ENCODE measurements at regions of chr10 and their contacts with region 1.

Region 1: DNA sequence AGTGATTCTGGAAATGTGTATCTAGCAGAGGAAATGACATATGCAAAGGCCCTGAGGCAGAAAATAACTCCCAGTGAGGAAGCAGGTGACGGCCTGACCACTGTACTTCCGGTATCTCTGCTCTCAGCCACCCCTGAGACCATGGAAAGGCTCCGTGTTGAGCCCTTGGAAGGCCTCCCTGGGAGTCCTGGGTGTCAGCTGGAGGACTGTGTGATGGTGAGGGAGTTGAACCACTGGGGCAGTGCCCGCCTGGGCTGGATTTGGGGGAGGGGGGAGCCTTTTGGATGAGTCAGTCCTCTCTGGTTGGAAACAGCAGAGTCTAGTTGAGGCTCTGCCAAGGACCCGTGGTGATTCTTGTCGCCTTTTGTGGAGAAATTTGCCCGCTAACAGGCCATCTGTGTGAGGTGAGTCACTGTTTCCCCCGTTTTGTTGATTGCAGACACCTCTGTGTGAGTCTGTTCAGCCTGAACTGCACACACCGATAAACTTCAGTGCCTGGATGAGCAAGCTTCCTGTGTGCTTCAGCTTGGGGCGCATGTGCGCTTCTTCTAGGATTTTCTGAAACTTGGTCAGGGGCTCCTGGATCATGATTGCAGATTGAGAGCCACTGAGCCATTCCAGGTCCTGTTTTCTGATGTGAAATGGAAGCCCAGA is 98.6 kb downstream of the GRK5 start:
- DNase-seq: peak; percentile 97
- H3K4me3 Mint-ChIP-seq: peak overlapping the region; percentile 68
- H3K27ac Mint-ChIP-seq: peak overlapping the region; percentile 99
- H3K4me1 Mint-ChIP-seq: peaks cover 74% of the 10 kb centered on the region
- H3K27me3 Mint-ChIP-seq: no peaks in the 10 kb centered on the region

Region 2: GRCh38 chr10:118892255-118892654 is 413.7 kb before region 1 on chr10:
- CTCF ChIA-PET with region 1: no interaction called
- intact Hi-C with region 1: no loop called
- DNase-seq: no peak
- H3K4me3 Mint-ChIP-seq: no peak overlapping the region
- H3K27ac Mint-ChIP-seq: no peak overlapping the region
- H3K4me1 Mint-ChIP-seq: no peaks in the 10 kb centered on the region
- H3K27me3 Mint-ChIP-seq: no peaks in the 10 kb centered on the region

Region 3: DNA sequence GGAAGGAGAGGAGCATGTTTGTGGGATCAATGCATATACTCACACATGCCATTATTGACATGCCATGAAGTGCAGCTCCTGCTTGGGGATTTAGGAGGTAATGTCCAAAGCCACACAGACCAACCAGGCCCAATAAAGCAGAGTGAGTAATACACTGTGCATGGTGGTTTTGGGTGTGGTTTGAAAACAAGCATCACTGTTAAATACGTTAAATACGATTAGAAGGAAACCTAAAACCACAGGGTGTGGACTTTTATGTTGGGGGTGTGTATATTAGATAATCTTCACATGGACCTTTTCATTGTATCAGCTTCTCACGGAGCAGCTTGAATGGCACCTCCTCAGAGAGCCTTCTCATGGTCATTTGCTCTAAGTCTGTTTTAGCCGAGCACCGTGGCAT is 215.0 kb before region 1 on chr10:
- CTCF ChIA-PET with region 1: no interaction called
- intact Hi-C with region 1: no loop called
- DNase-seq: peak; percentile 31
- H3K4me3 Mint-ChIP-seq: no peak overlapping the region
- H3K27ac Mint-ChIP-seq: no peak overlapping the region
- H3K4me1 Mint-ChIP-seq: peaks cover 22% of the 10 kb centered on the region
- H3K27me3 Mint-ChIP-seq: no peaks in the 10 kb centered on the region

Region 4: GRCh38 chr10:119131512-119132240 is 174.3 kb before region 1 on chr10:
- CTCF ChIA-PET with region 1: no interaction called
- intact Hi-C with region 1: loop called (anchors 1 kb)
- DNase-seq: peak; percentile 80
- H3K4me3 Mint-ChIP-seq: peak overlapping the region; percentile 80
- H3K27ac Mint-ChIP-seq: peak overlapping the region; percentile 99
- H3K4me1 Mint-ChIP-seq: peaks cover 44% of the 10 kb centered on the region
- H3K27me3 Mint-ChIP-seq: no peaks in the 10 kb centered on the region

Region 5: GRCh38 chr10:119285489-119286267 is 20.3 kb before region 1 on chr10:
- CTCF ChIA-PET with region 1: interaction called, 6 read pairs
- intact Hi-C with region 1: loop called (anchors 1 kb)
- DNase-seq: no peak
- H3K4me3 Mint-ChIP-seq: peak overlapping the region; percentile 55
- H3K27ac Mint-ChIP-seq: peak overlapping the region; percentile 78
- H3K4me1 Mint-ChIP-seq: peaks cover 81% of the 10 kb centered on the region
- H3K27me3 Mint-ChIP-seq: no peaks in the 10 kb centered on the region

Region 6: DNA sequence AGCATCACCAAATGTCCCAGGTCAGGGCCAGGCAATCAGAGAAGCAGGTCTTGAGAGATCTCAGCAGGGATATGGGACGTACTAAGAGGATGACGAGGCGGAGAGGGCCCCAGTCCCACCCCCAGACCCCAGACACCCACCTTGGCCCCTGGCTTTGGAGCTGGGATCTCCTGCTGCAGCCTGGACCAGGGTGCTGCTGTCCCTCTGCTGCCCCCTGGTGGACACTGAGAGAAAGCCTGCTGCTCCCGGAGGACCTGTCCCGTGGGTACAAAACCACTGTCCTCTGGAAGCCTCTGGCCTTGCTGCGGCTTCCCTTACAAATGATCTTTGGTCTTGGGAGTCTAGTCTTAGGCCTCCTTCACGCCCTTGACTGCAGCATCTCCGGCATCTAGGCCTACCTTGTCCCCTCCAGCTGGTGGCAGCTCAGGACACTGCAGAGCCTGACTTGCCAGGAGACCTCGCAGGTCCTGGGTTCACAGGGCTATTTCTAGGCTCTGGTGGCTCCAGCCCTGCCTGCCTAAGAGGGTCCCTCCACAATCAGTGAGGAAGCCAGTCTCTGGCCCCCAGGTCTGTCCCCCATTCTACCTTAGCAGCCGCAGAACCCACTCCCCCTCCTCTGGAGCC is 139.4 kb after region 1 on chr10:
- CTCF ChIA-PET with region 1: no interaction called
- intact Hi-C with region 1: no loop called
- DNase-seq: peak; percentile 92
- H3K4me3 Mint-ChIP-seq: no peak overlapping the region
- H3K27ac Mint-ChIP-seq: no peak overlapping the region
- H3K4me1 Mint-ChIP-seq: peaks cover 9% of the 10 kb centered on the region
- H3K27me3 Mint-ChIP-seq: no peaks in the 10 kb centered on the region

Region 7: GRCh38 chr10:119489991-119490326 is 184.0 kb after region 1 on chr10:
- CTCF ChIA-PET with region 1: interaction called, 3 read pairs
- intact Hi-C with region 1: loop called (anchors 1 kb)
- DNase-seq: no peak
- H3K4me3 Mint-ChIP-seq: peak overlapping the region; percentile 79
- H3K27ac Mint-ChIP-seq: peak overlapping the region; percentile 91
- H3K4me1 Mint-ChIP-seq: peaks cover 50% of the 10 kb centered on the region
- H3K27me3 Mint-ChIP-seq: no peaks in the 10 kb centered on the region

Region 8: GRCh38 chr10:119542988-119543813 is 237.2 kb after region 1 on chr10:
- CTCF ChIA-PET with region 1: no interaction called
- intact Hi-C with region 1: loop called (anchors 1 kb)
- DNase-seq: peak; percentile 83
- H3K4me3 Mint-ChIP-seq: peak overlapping the region; percentile 84
- H3K27ac Mint-ChIP-seq: peak overlapping the region; percentile 88
- H3K4me1 Mint-ChIP-seq: peaks cover 25% of the 10 kb centered on the region
- H3K27me3 Mint-ChIP-seq: no peaks in the 10 kb centered on the region

Region 9: DNA sequence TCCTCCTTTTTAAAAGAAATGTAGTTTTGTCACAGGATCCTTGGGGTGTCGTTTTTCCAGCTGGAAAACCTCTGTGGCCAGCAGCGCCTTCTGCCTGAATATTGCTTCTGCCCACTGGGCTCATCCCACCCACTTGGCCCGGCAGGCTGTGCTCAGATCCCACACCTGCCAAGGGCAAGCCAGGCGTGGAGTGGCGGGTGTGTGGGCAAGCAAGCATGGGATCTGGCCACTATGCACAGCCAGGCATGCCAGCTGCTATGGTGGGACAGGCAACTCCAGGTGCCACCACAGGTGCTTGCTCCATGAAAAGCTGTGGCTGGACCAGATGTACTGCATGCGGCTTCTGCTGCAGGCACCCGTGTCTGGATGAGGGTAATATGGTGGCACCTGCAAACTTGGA is 388.6 kb after region 1 on chr10:
- CTCF ChIA-PET with region 1: no interaction called
- intact Hi-C with region 1: no loop called
- DNase-seq: no peak
- H3K4me3 Mint-ChIP-seq: no peak overlapping the region
- H3K27ac Mint-ChIP-seq: no peak overlapping the region
- H3K4me1 Mint-ChIP-seq: no peaks in the 10 kb centered on the region
- H3K27me3 Mint-ChIP-seq: no peaks in the 10 kb centered on the region

Region 10: GRCh38 chr10:119705434-119705831 is 399.4 kb after region 1 on chr10:
- CTCF ChIA-PET with region 1: no interaction called
- intact Hi-C with region 1: loop called (anchors 1 kb)
- DNase-seq: no peak
- H3K4me3 Mint-ChIP-seq: no peak overlapping the region
- H3K27ac Mint-ChIP-seq: peak overlapping the region; percentile 96
- H3K4me1 Mint-ChIP-seq: peaks cover 81% of the 10 kb centered on the region
- H3K27me3 Mint-ChIP-seq: no peaks in the 10 kb centered on the region

Measured in activated naive CD4-positive, alpha-beta T cell treated with anti-CD3 and anti-CD28 coated beads for 36 hours (primary cell).